CD8-positive, alpha-beta T cell (primary cell): ENCODE measurements at regions of chr2 and their contacts with region 1.

Region 1: GRCh38 chr2:11154923-11155380 is 315 bp upstream of the SLC66A3 start:
- DNase-seq: peak; percentile 96 to 99 (median 98)
- ATAC-seq: peak; percentile 91
- H3K4me3 ChIP-seq: peak overlapping the region; percentile 55 to 57
- H3K4me3 Mint-ChIP-seq: peak overlapping the region; percentile 80
- H3K27ac ChIP-seq: peak overlapping the region; percentile 68 to 78
- H3K27ac Mint-ChIP-seq: peak overlapping the region; percentile 85
- H3K4me1 ChIP-seq: peaks cover 18% of the 10 kb centered on the region
- H3K4me1 Mint-ChIP-seq: peaks cover 20% of the 10 kb centered on the region
- H3K27me3 ChIP-seq: no peaks in the 10 kb centered on the region
- H3K27me3 Mint-ChIP-seq: no peaks in the 10 kb centered on the region
- CTCF ChIP-seq: no peak

Region 2: GRCh38 chr2:9951272-9951972 is 1203.5 kb before region 1 on chr2 and contains the start of gene GRHL1:
- CTCF ChIA-PET with region 1: no interaction called
- POLR2A ChIA-PET with region 1: no interaction called
- intact Hi-C with region 1: loop called in 1 of 2 experiments (anchors 10 kb)
- DNase-seq: peak; percentile 77 to 96 (median 89)
- ATAC-seq: peak; percentile 94
- H3K4me3 ChIP-seq: peak within 1 kb of the TSS; percentile 52 to 58
- H3K4me3 Mint-ChIP-seq: peak within 1 kb of the TSS; percentile 84
- H3K27ac ChIP-seq: no peak within 1 kb of the TSS
- H3K27ac Mint-ChIP-seq: peak within 1 kb of the TSS; percentile 41
- H3K4me1 ChIP-seq: peaks cover 11% of the 10 kb centered on the region
- H3K4me1 Mint-ChIP-seq: peaks cover 6% of the 10 kb centered on the region
- H3K27me3 ChIP-seq: peaks cover 8% of the 10 kb centered on the region in 2 experiments
- H3K27me3 Mint-ChIP-seq: peaks cover 42% of the 10 kb centered on the region
- CTCF ChIP-seq: no peak
- total RNA-seq, gene GRHL1: 0.76 to 0.86 TPM

Region 3: DNA sequence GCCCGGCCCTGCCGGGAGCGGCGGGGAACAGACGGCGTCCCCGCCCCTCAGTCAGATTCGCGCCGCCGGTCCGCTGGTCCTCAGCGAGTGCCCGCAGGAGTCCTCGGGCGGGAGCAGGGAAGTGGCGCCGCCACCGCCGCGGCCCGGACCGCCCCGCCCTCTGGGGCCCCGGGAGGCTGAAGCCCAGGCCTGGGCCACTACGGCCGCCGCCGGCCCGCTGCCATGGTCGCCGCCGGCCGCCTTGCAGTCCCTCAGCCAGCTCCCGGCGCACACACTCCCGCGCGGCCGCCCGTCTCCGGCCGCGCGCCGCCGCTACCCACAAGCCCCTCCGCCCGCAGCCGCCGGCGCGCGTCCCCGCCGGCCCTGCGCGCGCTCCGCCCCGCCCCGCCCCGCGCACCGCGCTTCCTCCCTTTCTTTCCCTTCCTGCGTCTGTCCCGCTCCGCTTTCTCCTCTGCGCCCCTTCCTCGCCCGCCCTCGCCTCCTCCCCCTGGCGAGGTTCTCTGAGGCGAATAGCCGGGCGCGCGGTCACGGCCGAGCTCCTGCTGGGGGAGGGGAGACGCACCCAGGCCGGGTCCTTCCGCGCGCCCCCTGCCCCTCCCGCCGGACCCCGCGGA is 189.5 kb after region 1 on chr2 and contains the start of gene ROCK2:
- CTCF ChIA-PET with region 1: no interaction called
- POLR2A ChIA-PET with region 1: interaction called, 11 read pairs
- intact Hi-C with region 1: loop called (anchors 2 kb)
- DNase-seq: peak; percentile 28 to 81 (median 62)
- ATAC-seq: peak; percentile 61
- H3K4me3 ChIP-seq: peak within 1 kb of the TSS; percentile 79 to 85
- H3K4me3 Mint-ChIP-seq: peak within 1 kb of the TSS; percentile 95
- H3K27ac ChIP-seq: peak within 1 kb of the TSS; percentile 37 to 43
- H3K27ac Mint-ChIP-seq: peak within 1 kb of the TSS; percentile 90
- H3K4me1 ChIP-seq: peaks cover 12% of the 10 kb centered on the region
- H3K4me1 Mint-ChIP-seq: peaks cover 42% of the 10 kb centered on the region
- H3K27me3 ChIP-seq: no peaks in the 10 kb centered on the region
- H3K27me3 Mint-ChIP-seq: no peaks in the 10 kb centered on the region
- CTCF ChIP-seq: no peak
- total RNA-seq, gene ROCK2: 4.1 to 5.7 TPM

Region 4: DNA sequence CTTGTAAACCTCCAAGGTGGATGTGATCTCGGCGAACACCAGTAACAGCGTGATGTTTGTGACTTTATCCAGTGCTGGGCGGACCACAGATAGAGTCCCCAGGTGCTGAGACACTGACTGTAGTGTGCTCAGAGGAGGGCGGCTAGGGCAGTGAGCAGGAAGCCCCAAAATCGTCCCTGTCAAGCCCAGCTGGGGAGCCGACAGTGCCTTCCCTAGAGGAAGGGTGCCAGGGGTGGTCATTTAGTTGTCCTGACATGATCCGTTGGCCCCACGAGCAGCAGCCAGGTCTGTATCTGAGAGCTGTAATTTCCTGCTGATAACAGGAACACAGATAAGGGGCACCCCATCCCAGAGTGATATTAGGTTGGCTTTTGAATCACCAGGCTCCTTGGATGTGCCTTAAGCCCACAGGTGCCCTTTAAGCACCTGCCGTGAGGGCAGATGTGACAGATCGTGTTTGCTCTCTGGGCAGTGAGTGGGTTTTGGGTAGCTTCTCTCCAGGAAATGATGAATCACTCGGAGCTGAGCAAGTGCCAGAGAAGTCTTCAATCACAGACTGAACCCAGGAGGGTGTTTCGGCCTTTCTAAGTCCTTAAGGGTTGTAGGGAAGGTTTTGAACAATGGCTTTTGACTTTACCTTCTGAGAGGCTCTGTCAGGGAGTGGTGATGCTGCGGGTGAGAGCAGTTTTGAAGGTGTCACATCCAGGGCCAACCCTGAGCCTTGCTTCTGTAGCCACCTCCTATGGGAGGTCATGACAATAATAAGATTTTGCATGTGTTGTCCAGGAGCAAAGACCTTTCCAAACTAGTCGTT is 599.1 kb after region 1 on chr2:
- CTCF ChIA-PET with region 1: no interaction called
- POLR2A ChIA-PET with region 1: no interaction called
- intact Hi-C with region 1: loop called in 1 of 2 experiments (anchors 1 kb)
- DNase-seq: peak in 8 of 9 experiments; percentile 41 to 78 (median 72)
- ATAC-seq: peak; percentile 43
- H3K4me3 ChIP-seq: peak overlapping the region; percentile 31 to 40
- H3K4me3 Mint-ChIP-seq: peak overlapping the region; percentile 84
- H3K27ac ChIP-seq: peak overlapping the region; percentile 36 to 91
- H3K27ac Mint-ChIP-seq: peak overlapping the region; percentile 96
- H3K4me1 ChIP-seq: peaks cover 67% of the 10 kb centered on the region
- H3K4me1 Mint-ChIP-seq: peaks cover 81% of the 10 kb centered on the region
- H3K27me3 ChIP-seq: no peaks in the 10 kb centered on the region
- H3K27me3 Mint-ChIP-seq: no peaks in the 10 kb centered on the region
- CTCF ChIP-seq: no peak